OCI-LY7 (cell line): ENCODE measurements at regions of chr2 and their contacts with region 1.

Region 1: DNA sequence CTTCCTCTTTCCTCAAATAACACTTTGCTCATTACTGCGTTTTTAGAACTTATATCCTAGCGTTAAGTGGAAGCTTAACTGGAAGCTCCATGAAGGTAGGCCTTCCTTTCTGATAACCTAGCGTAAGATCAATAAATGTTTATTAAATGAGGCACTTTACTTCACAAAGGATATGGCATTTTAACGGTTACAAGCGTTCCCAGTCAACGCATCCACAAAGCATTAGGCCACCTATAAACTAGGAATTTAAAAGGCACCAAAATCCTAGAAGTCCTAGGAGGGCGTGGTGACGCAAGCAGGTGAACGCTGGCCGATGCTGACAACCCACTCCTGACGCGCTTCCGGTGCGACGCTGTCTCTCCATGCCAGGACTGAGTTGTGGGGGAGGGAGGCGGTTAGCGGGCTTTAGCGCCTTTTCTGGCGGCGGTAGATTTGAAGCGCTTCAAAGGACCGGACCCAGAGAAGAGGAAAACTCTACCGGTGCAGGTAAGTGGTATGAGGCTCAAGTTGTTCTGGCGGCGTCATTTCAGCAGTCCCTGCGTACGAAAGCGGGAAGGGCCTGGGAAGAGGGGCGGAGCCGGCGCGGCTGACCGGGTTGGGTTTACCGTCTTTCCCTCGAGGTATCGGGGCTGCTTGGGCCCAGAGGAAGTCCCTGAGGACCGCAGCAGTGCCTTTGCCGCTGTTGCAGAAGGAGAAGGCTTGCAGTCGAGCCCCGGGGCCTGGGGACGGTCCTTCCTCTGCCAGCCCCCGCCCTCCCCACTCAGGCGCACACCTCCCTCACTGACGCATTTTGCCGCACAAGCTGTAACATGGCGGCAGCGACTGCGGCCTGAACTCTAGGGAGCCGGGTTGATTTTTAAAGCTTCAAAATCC is at the start of gene PPIG:
- DNase-seq: peak; percentile 94
- H3K4me3 ChIP-seq: peak within 1 kb of the TSS; percentile 88
- H3K27ac ChIP-seq: peak within 1 kb of the TSS; percentile 94
- H3K4me1 ChIP-seq: peaks cover 10% of the 10 kb centered on the region
- CTCF ChIP-seq: no peak
- total RNA-seq, gene PPIG: 33.5 and 48.5 TPM in 2 replicates

Region 2: DNA sequence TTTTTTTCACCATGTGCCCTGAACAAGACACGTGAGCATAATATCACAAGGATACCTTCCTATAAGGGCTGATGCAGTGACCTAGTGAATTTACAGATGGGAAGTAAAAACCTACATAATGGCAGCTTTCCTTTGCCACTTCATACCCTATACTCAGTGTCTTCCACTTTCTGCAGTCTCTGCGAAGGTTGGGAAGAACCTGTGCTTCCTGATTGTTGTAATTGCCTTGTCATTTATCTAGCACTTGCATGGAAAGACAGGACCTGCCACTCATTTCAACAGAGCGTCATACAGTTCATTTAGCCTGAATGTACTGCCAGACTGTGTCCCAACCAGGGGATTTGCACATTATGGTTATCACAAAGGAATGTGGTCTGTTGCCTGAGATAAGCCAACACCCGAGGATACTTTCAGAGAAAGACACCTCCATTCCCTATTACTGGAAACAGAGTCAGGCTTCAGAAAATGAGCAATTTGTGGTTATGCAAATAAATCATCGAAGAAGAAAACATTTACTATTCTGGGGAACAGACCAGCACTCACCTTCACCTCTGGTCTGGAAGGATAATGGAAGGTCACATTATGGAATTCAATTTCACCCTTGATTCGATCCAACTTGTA is 608.1 kb before region 1 on chr2:
- CTCF ChIA-PET with region 1: no interaction called
- POLR2A ChIA-PET with region 1: no interaction called
- intact Hi-C with region 1: no loop called
- DNase-seq: no peak
- H3K4me3 ChIP-seq: no peak overlapping the region
- H3K27ac ChIP-seq: no peak overlapping the region
- H3K4me1 ChIP-seq: no peaks in the 10 kb centered on the region
- CTCF ChIP-seq: no peak

Region 3: DNA sequence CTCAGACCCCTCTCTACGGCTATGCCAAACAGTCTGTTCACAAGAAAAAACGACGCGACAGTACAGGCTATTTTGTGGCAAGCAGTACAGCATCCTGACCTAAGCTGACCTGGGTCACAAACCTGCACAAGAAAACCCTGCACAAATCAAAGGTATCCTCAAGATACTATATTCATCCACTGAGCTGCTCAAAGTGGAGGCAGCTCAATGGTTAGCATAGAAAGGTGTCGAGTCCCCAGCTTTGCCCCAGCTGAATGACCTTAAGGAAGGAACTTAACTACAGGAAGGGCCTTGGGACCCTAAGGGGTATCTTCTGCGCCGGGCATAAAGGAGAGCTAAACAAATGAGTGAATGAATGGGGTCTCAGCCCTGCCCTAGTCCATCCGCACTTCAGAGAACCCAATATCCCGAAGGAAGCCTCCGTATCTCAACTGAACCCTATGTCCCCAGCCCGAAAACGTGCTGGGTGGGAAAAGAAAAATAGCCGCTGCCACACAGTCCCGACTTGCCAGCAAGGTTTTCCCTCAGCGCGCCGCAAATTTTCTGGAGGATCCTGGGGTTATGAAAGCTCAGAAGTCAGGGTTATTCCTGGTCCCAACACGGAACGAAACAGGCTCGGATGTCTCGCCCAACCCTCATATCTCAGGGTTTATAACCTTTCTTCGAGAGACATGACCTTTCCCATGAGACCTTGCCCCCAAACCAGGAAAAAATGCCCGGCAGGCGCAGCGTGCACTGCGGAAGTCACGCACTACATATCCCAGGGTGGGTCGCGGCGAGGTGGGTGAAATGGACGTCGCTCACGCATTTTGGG is 10.9 kb before region 1 on chr2 and contains the start of gene FASTKD1:
- CTCF ChIA-PET with region 1: interaction called, 4 read pairs
- POLR2A ChIA-PET with region 1: interaction called, 39 read pairs
- intact Hi-C with region 1: loop called (anchors 1 kb)
- DNase-seq: peak; percentile 96
- H3K4me3 ChIP-seq: peak within 1 kb of the TSS; percentile 92
- H3K27ac ChIP-seq: peak within 1 kb of the TSS; percentile 56
- H3K4me1 ChIP-seq: peaks cover 19% of the 10 kb centered on the region
- CTCF ChIP-seq: no peak
- total RNA-seq, gene FASTKD1: 25.1 and 34.6 TPM in 2 replicates

Region 4: GRCh38 chr2:169694113-169694903 is 110.1 kb after region 1 on chr2 and contains the starts of genes CFAP210 and PHOSPHO2:
- CTCF ChIA-PET with region 1: no interaction called
- POLR2A ChIA-PET with region 1: interaction called, 4 read pairs
- intact Hi-C with region 1: loop called (anchors 1 kb)
- DNase-seq: peak; percentile 95
- H3K4me3 ChIP-seq: peak within 1 kb of the TSS; percentile 73
- H3K27ac ChIP-seq: peak within 1 kb of the TSS; percentile 13
- H3K4me1 ChIP-seq: peaks cover 16% of the 10 kb centered on the region
- CTCF ChIP-seq: no peak
- total RNA-seq, gene CFAP210: not detected in 2 replicates
- total RNA-seq, gene PHOSPHO2: 2.8 and 4.8 TPM in 2 replicates

Region 5: DNA sequence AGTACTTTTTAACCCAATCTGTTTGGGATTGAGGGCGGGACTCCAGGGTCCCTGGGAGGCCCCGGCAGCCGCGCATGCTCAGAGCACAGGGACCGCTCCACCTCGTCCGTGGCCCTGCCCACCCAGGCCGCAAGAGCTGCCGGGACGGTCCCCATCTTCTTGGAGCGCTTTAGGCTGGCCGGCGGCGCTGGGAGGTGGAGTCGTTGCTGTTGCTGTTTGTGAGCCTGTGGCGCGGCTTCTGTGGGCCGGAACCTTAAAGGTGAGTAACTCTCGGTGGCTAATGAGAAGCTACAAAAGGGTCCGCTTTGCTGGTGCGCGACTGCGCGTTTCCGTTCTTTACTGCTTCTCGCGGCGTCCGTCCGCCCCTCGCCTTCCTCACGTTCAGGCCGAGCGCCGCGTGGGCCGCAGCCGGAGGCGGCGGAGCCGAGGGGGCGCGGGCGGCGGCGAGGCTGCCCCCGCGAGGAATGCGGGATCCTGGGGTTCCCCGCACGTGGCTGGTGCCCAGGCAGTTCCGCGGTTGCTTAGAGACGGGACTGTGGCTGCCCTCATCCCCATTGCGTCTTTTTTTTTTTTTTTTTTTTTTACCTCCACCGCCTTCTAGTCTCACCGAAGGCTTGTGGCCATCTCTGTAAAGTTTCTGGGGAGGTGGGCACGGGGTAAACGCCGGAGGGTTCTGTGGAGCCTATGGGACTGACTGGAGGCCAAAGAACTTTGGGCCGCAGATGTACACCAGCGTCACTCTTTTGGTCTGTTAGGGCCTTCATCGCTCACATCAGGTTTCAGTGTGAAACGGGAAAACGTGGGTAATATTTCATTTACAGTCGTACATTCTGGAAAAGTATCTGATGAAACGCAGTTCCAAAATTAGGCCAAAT is 214.7 kb after region 1 on chr2 and contains the start of gene SSB:
- CTCF ChIA-PET with region 1: no interaction called
- POLR2A ChIA-PET with region 1: no interaction called
- intact Hi-C with region 1: loop called (anchors 5 kb)
- DNase-seq: peak; percentile 95
- H3K4me3 ChIP-seq: peak within 1 kb of the TSS; percentile 87
- H3K27ac ChIP-seq: peak within 1 kb of the TSS; percentile 90
- H3K4me1 ChIP-seq: peaks cover 17% of the 10 kb centered on the region
- CTCF ChIP-seq: no peak
- total RNA-seq, gene SSB: 126 and 162 TPM in 2 replicates

Region 6: DNA sequence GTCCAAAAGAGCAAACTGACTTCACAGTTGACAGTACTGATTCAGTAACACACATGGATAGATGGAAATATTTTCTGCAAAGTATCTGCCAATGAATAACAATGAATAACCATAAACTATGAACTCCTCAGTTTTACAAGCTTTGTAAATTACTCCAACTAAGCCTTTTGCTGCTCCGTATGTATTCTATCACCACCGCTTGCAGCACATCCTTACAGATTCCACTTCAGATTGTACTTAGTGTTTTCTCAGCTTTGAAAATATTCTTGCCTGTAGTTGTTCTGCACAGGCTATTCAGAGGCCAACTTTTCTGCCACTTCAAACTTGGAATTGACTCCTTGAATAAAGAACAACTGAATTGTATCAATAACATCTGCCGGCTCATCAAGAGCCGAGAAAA is 1540.3 kb after region 1 on chr2:
- CTCF ChIA-PET with region 1: no interaction called
- POLR2A ChIA-PET with region 1: no interaction called
- intact Hi-C with region 1: no loop called
- DNase-seq: no peak
- H3K4me3 ChIP-seq: no peak overlapping the region
- H3K27ac ChIP-seq: no peak overlapping the region
- H3K4me1 ChIP-seq: peaks cover 20% of the 10 kb centered on the region
- CTCF ChIP-seq: no peak